Activated naive CD4-positive, alpha-beta T cell treated with anti-CD3 and anti-CD28 coated beads for 36 hours (primary cell): ENCODE measurements at regions of chr11 and their contacts with region 1.

Region 1: DNA sequence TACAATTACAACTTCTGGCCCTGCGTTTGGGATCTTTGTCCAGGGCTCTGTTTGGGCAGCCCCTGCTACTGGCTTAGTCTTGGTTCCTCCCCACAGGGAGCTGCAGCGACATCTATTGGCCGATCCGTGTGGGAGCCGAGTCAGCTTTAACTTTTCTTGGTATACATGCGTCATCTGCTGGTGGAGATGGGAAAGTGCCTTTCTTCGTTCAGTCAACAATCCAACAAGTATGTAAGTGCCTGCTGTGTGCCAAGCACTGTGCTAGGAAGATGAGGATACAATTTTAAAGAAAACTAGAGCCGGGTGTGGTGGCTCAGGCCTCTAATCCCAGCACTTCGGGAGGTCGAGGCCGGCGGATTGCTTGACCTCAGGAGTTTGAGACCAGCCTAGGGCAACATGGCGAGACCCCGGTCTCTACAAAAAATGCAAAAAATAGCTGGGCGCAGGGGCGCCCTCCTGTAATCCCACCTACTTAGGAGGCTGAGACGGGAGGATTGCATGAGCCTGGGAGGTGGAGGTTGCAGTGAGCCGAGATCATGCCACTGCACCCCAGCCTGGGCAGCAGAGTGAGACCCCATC is 8.2 kb downstream of the TPBGL start:
- DNase-seq: peak; percentile 95
- H3K4me3 Mint-ChIP-seq: no peak overlapping the region
- H3K27ac Mint-ChIP-seq: no peak overlapping the region
- H3K4me1 Mint-ChIP-seq: no peaks in the 10 kb centered on the region
- H3K27me3 Mint-ChIP-seq: peaks cover 3% of the 10 kb centered on the region

Region 2: GRCh38 chr11:74929431-74930363 is 319.1 kb before region 1 on chr11:
- CTCF ChIA-PET with region 1: interaction called, 25 read pairs
- intact Hi-C with region 1: loop called (anchors 1 kb)
- DNase-seq: peak; percentile 84
- H3K4me3 Mint-ChIP-seq: no peak overlapping the region
- H3K27ac Mint-ChIP-seq: no peak overlapping the region
- H3K4me1 Mint-ChIP-seq: peaks cover 2% of the 10 kb centered on the region
- H3K27me3 Mint-ChIP-seq: no peaks in the 10 kb centered on the region

Region 3: GRCh38 chr11:75022759-75023396 is 225.9 kb before region 1 on chr11:
- CTCF ChIA-PET with region 1: interaction called, 20 read pairs
- intact Hi-C with region 1: loop called (anchors 1 kb)
- DNase-seq: peak; percentile 87
- H3K4me3 Mint-ChIP-seq: no peak overlapping the region
- H3K27ac Mint-ChIP-seq: no peak overlapping the region
- H3K4me1 Mint-ChIP-seq: no peaks in the 10 kb centered on the region
- H3K27me3 Mint-ChIP-seq: no peaks in the 10 kb centered on the region

Region 4: DNA sequence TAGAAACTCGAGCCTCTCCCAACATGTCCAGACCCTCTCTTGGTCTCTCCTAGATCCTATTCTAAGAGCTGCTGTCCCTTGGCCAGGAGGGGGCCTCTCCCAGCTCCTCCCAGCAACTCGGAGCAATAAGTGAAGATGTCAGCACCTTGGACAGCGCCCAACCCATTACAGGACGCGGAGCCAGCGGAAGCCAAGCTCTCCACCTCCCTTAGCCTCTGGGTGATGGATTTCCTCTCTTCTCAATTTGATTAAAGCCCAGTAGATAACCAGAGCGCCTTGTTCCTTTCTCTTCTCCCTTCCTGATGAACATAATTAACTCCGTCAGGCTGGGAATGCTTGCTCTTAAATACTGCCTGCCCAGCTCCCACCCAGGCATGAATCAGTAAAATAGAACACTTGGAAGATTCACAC is 34.4 kb before region 1 on chr11:
- CTCF ChIA-PET with region 1: interaction called, 20 read pairs
- intact Hi-C with region 1: no loop called
- DNase-seq: peak; percentile 92
- H3K4me3 Mint-ChIP-seq: no peak overlapping the region
- H3K27ac Mint-ChIP-seq: no peak overlapping the region
- H3K4me1 Mint-ChIP-seq: no peaks in the 10 kb centered on the region
- H3K27me3 Mint-ChIP-seq: peaks cover 12% of the 10 kb centered on the region

Region 5: DNA sequence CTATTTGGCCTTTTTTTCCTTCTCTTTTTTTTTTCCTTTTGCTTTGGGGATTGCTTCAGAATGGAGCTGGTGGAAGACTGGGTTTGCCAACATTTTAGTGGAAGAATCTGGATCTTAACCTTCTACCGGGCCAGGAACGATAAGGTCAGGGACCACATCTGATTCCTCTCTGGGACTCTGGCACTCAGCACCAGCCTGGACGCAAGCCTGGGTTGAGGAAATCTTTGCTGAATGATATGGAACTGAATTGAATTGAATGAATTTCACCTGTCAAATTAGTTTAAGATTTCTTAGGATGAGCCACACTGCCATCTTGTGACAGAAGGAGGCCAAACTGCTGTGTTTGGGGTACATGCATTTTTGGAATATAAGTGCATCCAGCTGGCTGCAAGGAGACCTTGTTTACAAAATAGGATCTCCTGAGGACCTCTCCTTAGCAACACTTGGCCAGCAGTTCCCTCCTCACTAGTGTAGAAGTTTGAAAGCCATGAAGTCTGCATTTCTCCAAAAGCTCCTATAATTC is 22.2 kb after region 1 on chr11:
- CTCF ChIA-PET with region 1: interaction called, 14 read pairs
- intact Hi-C with region 1: no loop called
- DNase-seq: peak; percentile 43
- H3K4me3 Mint-ChIP-seq: no peak overlapping the region
- H3K27ac Mint-ChIP-seq: no peak overlapping the region
- H3K4me1 Mint-ChIP-seq: peaks cover 30% of the 10 kb centered on the region
- H3K27me3 Mint-ChIP-seq: no peaks in the 10 kb centered on the region